AG04449 (cell line): ENCODE measurements at regions of chr17 and their contacts with region 1.

Region 1: DNA sequence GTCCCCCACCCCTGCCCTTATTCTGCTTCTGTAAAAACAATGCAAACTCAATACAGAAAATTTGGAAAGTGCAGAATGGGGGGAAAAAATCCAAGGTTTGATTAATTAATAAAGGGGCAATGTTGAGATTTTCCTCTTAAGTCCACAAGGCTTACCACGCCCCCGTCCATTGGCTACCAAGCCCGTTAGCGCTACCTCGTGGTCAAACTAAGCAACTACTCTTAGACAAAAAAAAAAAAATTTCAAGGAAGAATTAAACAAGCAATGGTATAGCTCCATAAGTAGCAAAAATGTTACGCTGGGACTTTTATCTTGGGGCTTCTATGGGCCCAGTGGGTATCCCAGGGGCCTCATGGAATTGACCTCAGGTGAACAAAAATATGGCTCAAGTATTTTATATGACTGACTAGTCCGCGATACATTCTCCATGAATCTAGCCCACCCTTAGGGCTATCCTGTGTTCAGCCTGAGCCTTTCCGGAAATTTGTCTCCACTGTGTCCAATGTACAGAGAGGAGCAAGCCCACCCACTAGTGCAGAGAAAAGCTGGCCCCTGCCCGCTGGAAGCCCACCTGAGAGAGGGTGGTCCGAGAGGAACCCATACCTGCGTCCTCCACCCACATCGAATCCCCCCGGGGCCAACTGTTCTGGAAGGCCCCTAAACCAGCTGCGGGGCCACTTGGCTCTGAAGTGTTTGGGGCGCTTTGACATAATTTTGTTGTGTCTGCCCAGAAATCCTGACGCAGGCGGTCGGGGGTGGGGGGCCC is 19.1 kb upstream of the TEX2 start:
- DNase-seq: no peak
- H3K4me3 ChIP-seq: no peak overlapping the region
- CTCF ChIP-seq: peak; percentile 62

Region 2: DNA sequence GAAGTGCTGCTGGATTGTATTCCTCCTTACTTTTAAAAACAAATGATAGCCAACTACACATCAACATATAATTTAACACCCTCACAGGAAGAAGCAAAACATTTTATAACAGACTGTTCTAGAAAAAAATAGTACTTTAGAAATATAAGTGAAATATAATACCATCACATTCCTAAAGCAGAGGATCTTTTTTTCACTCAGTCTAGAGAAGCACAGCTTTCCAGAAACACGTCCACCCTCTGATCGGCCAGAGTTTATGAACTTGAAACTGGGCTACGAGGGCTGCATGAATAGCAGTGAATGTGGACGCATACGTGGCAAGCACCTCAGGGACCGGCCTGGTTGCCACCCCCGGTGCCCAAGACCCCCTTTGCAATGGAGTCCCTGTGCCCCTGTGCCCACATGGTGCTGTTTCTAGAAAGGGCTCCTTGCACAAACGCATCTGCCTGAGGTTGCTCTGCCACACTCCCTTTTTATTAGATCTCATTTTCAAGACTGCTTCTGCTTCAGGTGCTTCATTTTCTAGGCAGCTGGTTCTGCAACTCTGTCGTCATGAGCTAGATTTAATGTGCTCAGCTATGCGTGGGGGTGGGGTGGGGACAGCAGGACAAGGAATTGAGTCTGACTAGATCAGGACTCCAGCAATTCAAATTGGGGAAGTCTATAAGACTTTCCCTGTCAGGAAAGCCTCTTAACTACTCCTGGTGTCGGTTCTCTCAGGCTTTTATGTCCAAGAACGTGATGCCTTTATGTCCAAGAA is 123.1 kb before region 1 on chr17:
- CTCF ChIA-PET with region 1: interaction called, 13 read pairs
- POLR2A ChIA-PET with region 1: no interaction called
- DNase-seq: no peak
- H3K4me3 ChIP-seq: no peak overlapping the region
- CTCF ChIP-seq: no peak

Region 3: GRCh38 chr17:64262417-64263260 is 19.5 kb before region 1 on chr17 and contains the start of gene TEX2:
- CTCF ChIA-PET with region 1: interaction called, 10 read pairs
- POLR2A ChIA-PET with region 1: no interaction called
- DNase-seq: no peak
- H3K4me3 ChIP-seq: peak within 1 kb of the TSS; percentile 79
- CTCF ChIP-seq: no peak

Region 4: DNA sequence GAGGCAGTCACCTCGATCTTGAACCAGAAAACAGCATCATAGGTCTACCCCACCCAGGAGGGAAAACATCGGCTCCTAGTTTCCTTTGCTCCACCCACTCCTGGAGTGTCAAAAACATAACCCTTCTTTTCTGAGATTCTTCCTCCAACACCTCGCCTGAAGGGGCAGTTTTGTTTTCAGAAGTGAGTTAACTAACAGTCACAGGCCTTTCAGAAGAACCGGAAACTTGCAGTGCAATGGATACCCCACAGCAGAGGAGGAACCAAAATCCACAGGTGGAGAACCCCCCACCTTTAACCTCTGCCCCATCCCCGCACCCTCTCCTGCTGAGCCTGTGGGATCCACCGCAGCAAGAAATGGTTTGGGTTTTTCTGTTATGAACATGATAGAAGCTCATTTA is 11.3 kb before region 1 on chr17:
- CTCF ChIA-PET with region 1: interaction called, 26 read pairs
- POLR2A ChIA-PET with region 1: no interaction called
- DNase-seq: no peak
- H3K4me3 ChIP-seq: no peak overlapping the region
- CTCF ChIP-seq: no peak

Region 5: GRCh38 chr17:64315032-64315490 is 32.9 kb after region 1 on chr17:
- CTCF ChIA-PET with region 1: no interaction called
- POLR2A ChIA-PET with region 1: no interaction called
- DNase-seq: no peak
- H3K4me3 ChIP-seq: no peak overlapping the region
- CTCF ChIP-seq: no peak